Mucosa of descending colon (tissue), 3 donors: ENCODE measurements at regions of chr21 and their contacts with region 1.

Region 1: DNA sequence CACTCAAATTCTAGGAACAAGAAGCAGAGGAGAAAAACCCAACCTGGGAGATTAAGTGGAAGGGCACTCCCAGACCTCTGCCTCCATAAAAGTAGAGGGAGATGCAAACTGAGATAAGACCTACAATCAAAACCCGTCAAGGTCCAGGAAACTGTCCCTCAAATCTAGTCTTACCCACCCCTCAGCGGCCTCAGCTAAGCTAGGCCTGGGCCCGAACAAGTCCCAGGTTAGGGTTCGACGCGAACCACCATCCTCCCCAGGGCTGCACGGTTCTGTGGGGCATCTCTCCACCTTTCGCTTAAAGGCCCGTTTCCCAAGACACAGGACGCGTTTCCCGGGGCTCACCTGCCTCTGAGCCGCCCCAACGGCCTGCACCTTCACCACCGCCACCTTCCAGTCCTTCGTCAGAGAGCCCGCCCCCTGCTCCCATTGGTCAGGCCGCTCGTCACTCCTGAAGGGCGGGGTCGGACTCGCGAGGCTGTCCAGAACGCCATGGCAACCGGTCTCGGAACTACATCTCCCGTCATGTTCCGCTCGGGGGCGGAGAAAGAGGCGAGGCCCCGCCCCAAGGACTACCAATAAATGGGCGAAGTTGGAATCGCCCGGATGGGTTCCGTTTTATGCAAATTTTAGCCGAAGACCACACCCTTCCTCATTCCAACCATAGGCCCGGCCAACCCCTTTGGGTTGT is at the start of gene CRYZL1:
- DNase-seq: peak; percentile 100
- ATAC-seq: peak; percentile 87
- H3K4me3 ChIP-seq: peak within 1 kb of the TSS; percentile 96
- H3K4me1 ChIP-seq: peaks cover 14% of the 10 kb centered on the region
- CTCF ChIP-seq: no peak
- total RNA-seq, gene CRYZL1: 33.1 to 55.5 (median 34.0) TPM

Region 2: GRCh38 chr21:33894736-33895288 is 253.3 kb after region 1 on chr21:
- intact Hi-C with region 1: loop called in 1 of 2 experiments (anchors 10 kb)
- DNase-seq: peak; percentile 59 to 71 (median 65)
- ATAC-seq: peak; percentile 75
- H3K4me3 ChIP-seq: no peak overlapping the region
- H3K4me1 ChIP-seq: peaks cover 6% of the 10 kb centered on the region
- CTCF ChIP-seq: no peak